HEK293 (cell line): ENCODE measurements at regions of chr1 and their contacts with region 1.

Region 1: GRCh38 chr1:23524716-23525401 is 6.2 kb downstream of the E2F2 start:
- H3K4me3 ChIP-seq: no peak overlapping the region
- H3K27ac ChIP-seq: no peak overlapping the region; the same call in 1 of the 2 replicates
- H3K4me1 ChIP-seq: peaks cover 11% of the 10 kb centered on the region
- CTCF ChIP-seq: no peak

Region 2: GRCh38 chr1:23514111-23514679 is 10.7 kb before region 1 on chr1:
- CTCF ChIA-PET with region 1: interaction called, 12 read pairs
- POLR2A ChIA-PET with region 1: interaction called, 4 read pairs
- H3K4me3 ChIP-seq: no peak overlapping the region
- H3K27ac ChIP-seq: no peak overlapping the region
- H3K4me1 ChIP-seq: no peaks in the 10 kb centered on the region
- CTCF ChIP-seq: no peak

Region 3: GRCh38 chr1:23567996-23568607 is 43.2 kb after region 1 on chr1:
- CTCF ChIA-PET with region 1: no interaction called
- POLR2A ChIA-PET with region 1: no interaction called
- H3K4me3 ChIP-seq: peak overlapping the region; percentile 12
- H3K27ac ChIP-seq: no peak overlapping the region; the same call in 1 of the 2 replicates
- H3K4me1 ChIP-seq: no peaks in the 10 kb centered on the region; the same call in 1 of the 2 replicates
- CTCF ChIP-seq: no peak

Region 4: DNA sequence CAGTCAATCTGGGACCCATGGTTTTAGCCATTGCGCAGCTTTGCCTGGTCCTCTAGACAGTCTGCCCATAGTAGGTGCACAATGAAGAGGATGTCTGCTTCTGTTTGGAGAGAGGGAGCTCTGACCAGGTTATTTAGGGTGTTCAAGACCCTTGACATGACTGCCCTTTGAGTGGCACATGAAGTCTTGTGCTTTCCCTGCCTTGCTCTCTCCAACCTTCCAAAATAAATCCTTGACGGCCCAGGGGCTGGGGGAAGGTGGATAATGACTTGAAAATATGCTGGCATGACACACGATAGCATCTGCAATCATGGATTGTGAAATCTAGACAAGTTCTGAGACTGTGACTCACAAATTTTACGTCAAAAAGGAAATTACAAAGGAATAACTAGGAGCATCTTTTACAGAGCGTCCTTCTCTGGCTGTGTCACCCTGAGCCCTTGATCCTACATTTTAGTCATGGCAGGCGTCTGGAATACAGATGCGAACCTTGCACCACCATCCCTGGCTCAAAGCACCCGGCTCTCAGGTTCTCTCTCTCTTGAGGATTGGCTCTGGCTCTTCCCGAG is 60.7 kb after region 1 on chr1:
- CTCF ChIA-PET with region 1: no interaction called
- POLR2A ChIA-PET with region 1: no interaction called
- H3K4me3 ChIP-seq: no peak overlapping the region
- H3K27ac ChIP-seq: no peak overlapping the region
- H3K4me1 ChIP-seq: no peaks in the 10 kb centered on the region
- CTCF ChIP-seq: no peak